ENCODE measurements at regions of chr11 and their contacts with region 1.

Region 1: GRCh38 chr11:116853461-116854073 is 16.1 kb upstream of the APOA1 start:
- DNase-seq: no peak
- ATAC-seq: peak; percentile 31 to 50

Region 2: GRCh38 chr11:116563028-116563711 is 290.4 kb before region 1 on chr11:
- intact Hi-C with region 1: no loop called
- DNase-seq: no peak
- ATAC-seq: peak; percentile 80 to 89

Region 3: DNA sequence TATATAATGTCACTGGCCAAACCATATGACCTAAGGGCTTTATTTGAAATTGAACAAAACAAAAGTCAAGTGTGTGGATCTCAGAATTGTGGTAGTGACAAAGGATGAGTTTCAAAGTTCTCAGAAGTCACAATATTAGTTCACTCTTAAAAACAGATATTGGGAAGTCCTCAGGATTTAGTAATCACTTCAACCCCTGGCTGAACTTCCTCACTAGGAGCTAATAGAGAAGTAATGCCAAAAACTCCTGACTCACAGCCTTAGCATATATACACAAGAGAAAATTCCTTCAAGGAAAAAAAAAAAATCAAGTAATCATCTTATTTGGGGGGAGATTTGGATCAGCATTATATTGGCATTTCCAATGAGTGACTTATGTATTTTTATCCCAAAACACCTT is 59.4 kb after region 1 on chr11:
- intact Hi-C with region 1: loop called in 1 of 2 experiments (anchors 10 kb)
- DNase-seq: no peak
- ATAC-seq: peak in 1 of 2 donors; percentile 79